ENCODE measurements at regions of chr1 and their contacts with region 1.

Region 1: GRCh38 chr1:52033190-52034049 is at the start of gene KTI12:
- DNase-seq: peak; percentile 91
- H3K4me3 Mint-ChIP-seq: peak within 1 kb of the TSS; percentile 93
- H3K27ac Mint-ChIP-seq: peak within 1 kb of the TSS; percentile 74
- H3K4me1 Mint-ChIP-seq: peaks cover 31% of the 10 kb centered on the region
- H3K27me3 Mint-ChIP-seq: no peaks in the 10 kb centered on the region
- total RNA-seq, gene KTI12: 11.2 to 12.6 TPM

Region 2: GRCh38 chr1:52056163-52056936 is 22.9 kb after region 1 on chr1 and contains the start of gene BTF3L4:
- CTCF ChIA-PET with region 1: interaction called, 5 read pairs
- POLR2A ChIA-PET with region 1: interaction called, 15 read pairs
- intact Hi-C with region 1: loop called (anchors 1 kb)
- DNase-seq: peak; percentile 97
- H3K4me3 Mint-ChIP-seq: peak within 1 kb of the TSS; percentile 94
- H3K27ac Mint-ChIP-seq: peak within 1 kb of the TSS; percentile 98
- H3K4me1 Mint-ChIP-seq: peaks cover 53% of the 10 kb centered on the region
- H3K27me3 Mint-ChIP-seq: no peaks in the 10 kb centered on the region
- total RNA-seq, gene BTF3L4: 32.5 to 35.2 TPM